PC-9 (cell line): ENCODE measurements at regions of chr9 and their contacts with region 1.

Region 1: GRCh38 chr9:124708633-124709291 is 62.3 kb downstream of the NR6A1 start:
- DNase-seq: peak; percentile 47 to 93
- H3K4me3 ChIP-seq: no peak overlapping the region
- H3K27ac ChIP-seq: peak overlapping the region; percentile 57
- H3K4me1 ChIP-seq: peaks cover 36% of the 10 kb centered on the region
- H3K27me3 ChIP-seq: no peaks in the 10 kb centered on the region
- CTCF ChIP-seq: no peak

Region 2: GRCh38 chr9:124415102-124415851 is 293.5 kb before region 1 on chr9 and contains the start of gene PSMB7:
- CTCF ChIA-PET with region 1: interaction called, 8 read pairs
- POLR2A ChIA-PET with region 1: no interaction called
- intact Hi-C with region 1: loop called (anchors 1 kb)
- DNase-seq: peak; percentile 91 to 96
- H3K4me3 ChIP-seq: peak within 1 kb of the TSS; percentile 90
- H3K27ac ChIP-seq: peak within 1 kb of the TSS; percentile 71
- H3K4me1 ChIP-seq: peaks cover 35% of the 10 kb centered on the region
- H3K27me3 ChIP-seq: no peaks in the 10 kb centered on the region
- CTCF ChIP-seq: peak; percentile 87
- total RNA-seq, gene PSMB7: 328 and 359 TPM in 2 replicates

Region 3: GRCh38 chr9:124551472-124552272 is 157.1 kb before region 1 on chr9:
- CTCF ChIA-PET with region 1: interaction called, 21 read pairs
- POLR2A ChIA-PET with region 1: interaction called, 14 read pairs
- intact Hi-C with region 1: loop called (anchors 1 kb)
- DNase-seq: peak; percentile 71 to 78
- H3K4me3 ChIP-seq: no peak overlapping the region
- H3K27ac ChIP-seq: peak overlapping the region; percentile 45
- H3K4me1 ChIP-seq: peaks cover 23% of the 10 kb centered on the region
- H3K27me3 ChIP-seq: no peaks in the 10 kb centered on the region
- CTCF ChIP-seq: peak; percentile 78

Region 4: DNA sequence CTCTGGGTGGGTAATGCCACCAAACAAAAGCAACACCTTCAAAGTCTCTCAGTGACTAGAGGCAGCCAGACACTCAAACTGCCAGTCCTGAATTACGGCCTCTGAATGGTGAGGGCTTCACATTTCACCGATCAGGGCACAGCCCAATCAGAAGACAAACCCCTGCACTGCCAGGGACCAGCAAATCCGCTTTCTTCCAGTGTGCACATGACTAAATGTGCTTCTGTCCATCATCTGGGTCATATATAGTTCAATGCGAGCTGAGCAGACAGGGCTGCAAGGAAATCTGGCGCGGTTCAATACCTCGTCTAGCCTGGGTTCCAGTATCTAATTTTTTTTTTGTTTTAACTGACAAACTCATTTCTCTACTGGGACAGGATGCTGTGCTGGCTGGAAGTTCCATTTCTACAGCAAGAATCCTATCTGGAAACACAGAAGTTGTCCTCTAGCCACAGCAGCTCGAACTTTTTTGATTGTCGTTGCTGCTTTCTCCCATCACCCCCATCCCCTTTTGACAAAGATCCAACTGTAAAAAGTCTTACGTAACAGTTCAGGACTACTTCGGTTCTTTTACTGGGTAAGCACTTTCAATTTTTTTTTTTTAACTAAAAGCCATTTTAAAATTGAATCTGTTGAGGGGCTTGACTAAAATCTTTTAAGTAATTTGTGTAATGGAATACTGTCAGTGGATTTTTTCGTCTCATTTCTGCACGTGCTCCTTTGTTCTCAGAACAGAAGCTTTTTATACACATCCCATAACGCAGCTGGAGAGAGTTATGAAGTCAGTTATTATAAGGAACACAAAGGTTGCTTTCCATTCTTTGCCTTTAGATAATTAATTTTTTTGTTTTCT is 50.4 kb before region 1 on chr9:
- CTCF ChIA-PET with region 1: interaction called, 4 read pairs
- POLR2A ChIA-PET with region 1: interaction called, 5 read pairs
- intact Hi-C with region 1: loop called (anchors 1 kb)
- DNase-seq: peak; percentile 87 to 94
- H3K4me3 ChIP-seq: peak overlapping the region; percentile 70
- H3K27ac ChIP-seq: peak overlapping the region; percentile 94
- H3K4me1 ChIP-seq: peaks cover 41% of the 10 kb centered on the region
- H3K27me3 ChIP-seq: no peaks in the 10 kb centered on the region
- CTCF ChIP-seq: no peak

Region 5: DNA sequence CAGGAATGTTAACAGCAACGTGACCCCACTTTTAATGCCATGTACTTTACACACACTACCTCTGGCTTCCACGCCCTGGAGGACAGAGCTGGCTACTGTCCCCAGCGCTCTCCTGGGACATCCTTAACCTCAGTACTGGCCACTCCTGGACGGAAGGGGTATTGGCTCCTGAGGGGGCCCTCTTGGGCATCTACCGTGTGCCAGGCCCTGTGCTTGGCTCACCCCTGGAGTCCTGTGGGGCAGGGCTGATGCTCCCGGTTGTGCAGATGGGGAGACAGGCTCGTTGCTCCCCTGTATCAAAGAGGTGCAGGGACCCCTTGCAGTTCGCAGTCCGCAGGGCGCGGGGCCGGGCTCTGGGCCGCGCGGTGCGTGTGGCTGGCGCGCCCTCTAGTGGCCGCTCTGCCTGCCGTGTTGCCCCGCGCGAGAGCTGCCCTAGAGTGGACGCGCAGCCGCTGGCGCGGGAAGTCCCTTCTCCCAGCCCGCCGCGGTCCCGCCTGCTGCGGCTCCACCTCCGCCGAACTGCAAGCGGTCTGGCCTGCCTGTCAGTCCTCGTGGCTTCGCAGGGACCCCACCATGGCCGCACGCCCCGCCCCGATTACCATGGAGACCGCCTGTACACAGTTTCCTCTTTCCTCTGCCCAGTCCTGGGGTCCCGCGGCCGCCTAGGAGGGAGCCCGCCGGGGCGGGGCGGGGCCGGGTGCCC is 144.2 kb after region 1 on chr9 and contains the start of gene WDR38:
- CTCF ChIA-PET with region 1: no interaction called
- POLR2A ChIA-PET with region 1: no interaction called
- intact Hi-C with region 1: loop called (anchors 1 kb)
- DNase-seq: peak; percentile 66 to 82
- H3K4me3 ChIP-seq: peak within 1 kb of the TSS; percentile 63
- H3K27ac ChIP-seq: no peak within 1 kb of the TSS
- H3K4me1 ChIP-seq: 0 out of 2 replicates have a peak, but pooled peaks cover 7% of the 10 kb centered on the region
- H3K27me3 ChIP-seq: no peaks in the 10 kb centered on the region
- CTCF ChIP-seq: peak; percentile 99
- total RNA-seq, gene WDR38: not detected in 2 replicates